Right ventricle myocardium inferior (tissue), 1 donor: ENCODE measurements at regions of chr6 and their contacts with region 1.

Region 1: GRCh38 chr6:167881327-167881726 is 54.6 kb downstream of the AFDN start:
- DNase-seq: no peak
- ATAC-seq: no peak

Region 2: GRCh38 chr6:167778497-167779139 is 102.7 kb before region 1 on chr6:
- intact Hi-C with region 1: loop called (anchors 10 kb)
- DNase-seq: no peak
- ATAC-seq: no peak

Region 3: DNA sequence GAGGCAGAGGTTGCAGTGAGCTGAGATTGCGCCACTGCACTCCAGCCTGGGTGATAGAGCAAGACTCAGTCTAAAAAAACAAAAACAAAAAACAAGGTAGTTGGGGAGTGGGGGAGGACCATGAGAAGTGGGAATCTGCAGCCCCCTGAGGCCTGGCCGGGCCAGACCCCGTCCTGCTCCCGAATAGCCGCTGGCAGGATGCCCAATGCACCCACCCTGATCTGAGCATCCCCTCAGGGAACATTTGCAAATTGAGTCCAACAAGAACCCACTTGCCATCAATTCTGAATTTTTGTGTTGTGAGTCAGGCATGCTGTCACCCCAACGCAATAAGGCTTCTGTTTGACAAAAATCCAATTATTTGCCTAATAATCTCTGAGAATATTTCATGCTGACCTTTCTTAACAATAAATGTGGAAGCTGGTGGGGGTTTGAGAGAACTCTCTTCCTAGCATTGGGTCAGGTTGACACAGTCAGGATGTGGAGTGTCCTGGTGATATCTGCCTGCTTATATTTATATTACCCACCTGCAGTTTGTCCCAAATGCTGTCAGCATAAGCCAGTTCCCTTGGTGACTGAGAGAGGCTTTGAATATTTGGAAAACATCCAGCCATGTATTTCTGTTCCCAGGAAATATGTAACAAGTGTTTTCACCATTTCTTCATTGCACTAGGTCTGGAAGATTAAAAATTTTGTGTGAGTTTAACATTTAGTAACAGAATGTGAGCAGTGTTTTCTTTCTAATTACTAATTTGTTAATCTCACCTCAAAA is 226.1 kb after region 1 on chr6:
- intact Hi-C with region 1: no loop called
- DNase-seq: no peak
- ATAC-seq: peak; percentile 63